ENCODE measurements at regions of chr15 and their contacts with region 1.

Region 1: GRCh38 chr15:59492389-59493377 is 54.7 kb downstream of the FAM81A start:
- DNase-seq: peak; percentile 34 to 71
- ATAC-seq: peak; percentile 88 to 96 (median 94)
- H3K4me3 ChIP-seq: peak overlapping the region in 2 of 10 donors; percentile 10 to 20
- H3K27ac ChIP-seq: no peak overlapping the region
- H3K4me1 ChIP-seq: peaks cover 0 to 19% (median 9%) of the 10 kb centered on the region in 9 donors
- H3K27me3 ChIP-seq: no peaks in the 10 kb centered on the region
- CTCF ChIP-seq: peak; percentile 76 to 90 (median 84)

Region 2: DNA sequence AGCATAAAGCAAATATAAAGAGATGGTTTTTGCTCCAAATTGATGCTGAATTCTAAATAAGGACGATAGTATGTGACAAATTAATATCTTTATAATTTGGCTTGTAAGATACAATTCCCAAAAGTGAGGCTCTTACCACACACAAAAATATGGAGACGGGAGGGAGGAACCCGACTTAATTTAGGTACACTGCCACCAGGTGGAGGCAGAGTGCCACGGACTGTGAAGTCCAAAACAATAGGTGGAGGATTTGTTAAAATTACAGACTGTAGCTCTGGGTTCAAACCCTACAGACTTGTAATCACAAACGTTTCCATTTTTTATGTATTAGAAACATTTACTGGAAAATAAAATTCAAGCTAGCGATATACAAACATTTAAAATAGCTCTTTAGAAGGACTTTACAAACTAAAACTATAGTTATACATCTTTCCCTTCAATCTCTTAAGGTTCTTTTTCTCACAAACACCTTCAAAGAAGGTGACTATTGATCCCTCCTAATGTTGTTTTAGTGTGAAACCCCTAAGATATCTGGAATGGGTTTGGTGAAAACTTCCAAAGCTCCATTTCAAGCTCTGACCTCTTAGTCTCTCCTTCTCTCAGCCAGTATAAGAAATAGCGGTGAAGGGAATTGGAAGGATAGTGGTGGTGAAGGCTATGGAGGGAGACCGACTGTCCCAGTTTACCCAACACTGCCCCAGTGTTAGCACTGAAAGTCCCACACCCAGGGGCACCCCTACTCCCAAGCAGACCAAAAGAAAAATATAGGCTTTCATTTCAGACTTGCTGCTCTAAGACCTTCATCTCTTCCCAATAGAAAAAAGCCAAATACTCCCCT is 1264.8 kb before region 1 on chr15:
- intact Hi-C with region 1: loop called in 1 of 10 experiments (anchors 10 kb)
- DNase-seq: peak; percentile 71 to 74
- ATAC-seq: peak in 7 of 8 donors; percentile 49 to 86 (median 72)
- H3K4me3 ChIP-seq: no peak overlapping the region
- H3K27ac ChIP-seq: peak overlapping the region in 9 of 10 donors; percentile 18 to 78 (median 68)
- H3K4me1 ChIP-seq: peaks cover 6 to 45% (median 35%) of the 10 kb centered on the region in 9 donors
- H3K27me3 ChIP-seq: no peaks in the 10 kb centered on the region
- CTCF ChIP-seq: peak; percentile 66 to 90 (median 85)

Region 3: GRCh38 chr15:58987489-58988005 is 505.1 kb before region 1 on chr15 and contains the start of gene RNF111:
- intact Hi-C with region 1: loop called in 4 of 10 experiments (anchors 5 to 10 kb)
- DNase-seq: peak; percentile 84 to 94
- ATAC-seq: peak; percentile 95 to 98 (median 98)
- H3K4me3 ChIP-seq: peak within 1 kb of the TSS; percentile 66 to 98 (median 84)
- H3K27ac ChIP-seq: peak within 1 kb of the TSS; percentile 49 to 96 (median 90)
- H3K4me1 ChIP-seq: peaks cover 0 to 30% (median 19%) of the 10 kb centered on the region in 9 donors
- H3K27me3 ChIP-seq: no peaks in the 10 kb centered on the region
- CTCF ChIP-seq: no peak
- total RNA-seq, gene RNF111: 21.2 to 28.7 (median 24.4) TPM

Region 4: GRCh38 chr15:59247364-59247763 is 245.3 kb before region 1 on chr15:
- intact Hi-C with region 1: loop called in 9 of 10 experiments (anchors 2 to 10 kb)
- DNase-seq: peak in 1 of 2 donors; percentile 62
- ATAC-seq: peak; percentile 72 to 94 (median 82)
- H3K4me3 ChIP-seq: no peak overlapping the region
- H3K27ac ChIP-seq: no peak overlapping the region
- H3K4me1 ChIP-seq: peaks cover 0 to 28% (median 9%) of the 10 kb centered on the region in 9 donors
- H3K27me3 ChIP-seq: no peaks in the 10 kb centered on the region
- CTCF ChIP-seq: peak; percentile 34 to 80 (median 62)

Region 5: DNA sequence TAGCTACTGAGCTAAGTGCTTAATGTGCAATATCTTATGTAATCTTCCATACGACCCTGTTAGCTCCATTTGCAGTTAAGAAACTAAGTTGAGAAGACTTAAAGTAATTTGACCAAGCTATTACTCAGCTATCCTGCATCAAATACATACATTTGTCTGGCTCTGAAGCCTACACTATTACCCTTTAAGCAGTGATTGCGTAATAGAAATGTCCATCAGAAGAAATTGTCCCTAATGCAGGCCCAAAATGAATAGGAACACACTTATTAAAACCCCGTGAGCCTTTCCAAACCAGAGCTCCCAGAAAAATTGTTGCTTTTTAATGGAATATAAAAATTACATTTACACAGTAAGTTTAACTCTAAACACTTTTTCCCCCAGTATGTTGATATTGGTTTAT is 114.7 kb before region 1 on chr15:
- intact Hi-C with region 1: loop called in 8 of 10 experiments (anchors 2 to 10 kb)
- DNase-seq: no peak
- ATAC-seq: no peak
- H3K4me3 ChIP-seq: no peak overlapping the region
- H3K27ac ChIP-seq: no peak overlapping the region
- H3K4me1 ChIP-seq: peaks cover 0 to 17% (median 7%) of the 10 kb centered on the region in 9 donors
- H3K27me3 ChIP-seq: peaks cover 0 to 8% (median 0%) of the 10 kb centered on the region in 7 donors
- CTCF ChIP-seq: no peak

Region 6: GRCh38 chr15:59528965-59529402 is 36.3 kb after region 1 on chr15:
- intact Hi-C with region 1: no loop called
- DNase-seq: peak; percentile 53 to 86
- ATAC-seq: peak; percentile 91 to 97 (median 93)
- H3K4me3 ChIP-seq: no peak overlapping the region
- H3K27ac ChIP-seq: no peak overlapping the region
- H3K4me1 ChIP-seq: peaks cover 0 to 14% (median 0%) of the 10 kb centered on the region in 9 donors
- H3K27me3 ChIP-seq: peaks cover 0 to 14% (median 7%) of the 10 kb centered on the region in 7 donors
- CTCF ChIP-seq: peak; percentile 67 to 85 (median 80)